Activated naive CD4-positive, alpha-beta T cell treated with anti-CD3 and anti-CD28 coated beads for 36 hours (primary cell): ENCODE measurements at regions of chr1 and their contacts with region 1.

Region 1: DNA sequence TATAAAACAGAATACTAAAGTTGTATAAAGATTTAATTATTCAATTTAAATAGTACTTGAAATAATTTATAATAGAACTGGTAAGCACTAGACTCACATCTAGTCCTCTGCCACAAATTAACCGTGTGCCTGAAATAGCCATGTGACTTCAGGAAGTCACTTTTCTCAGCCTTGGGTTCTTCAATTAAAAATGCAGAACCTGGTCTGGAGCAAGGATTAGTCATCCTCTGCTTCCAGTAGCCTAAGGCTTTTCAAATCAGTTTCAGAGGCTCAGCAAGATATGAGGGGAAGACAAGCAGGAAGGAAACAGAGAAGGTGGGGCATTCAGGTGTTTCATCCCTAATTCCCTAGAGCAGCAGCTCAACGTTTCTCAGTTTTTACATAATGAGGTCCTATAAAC is 23.0 kb downstream of the DPH5 start:
- DNase-seq: no peak
- H3K4me3 Mint-ChIP-seq: no peak overlapping the region
- H3K27ac Mint-ChIP-seq: peak overlapping the region; percentile 59
- H3K4me1 Mint-ChIP-seq: peaks cover 52% of the 10 kb centered on the region
- H3K27me3 Mint-ChIP-seq: no peaks in the 10 kb centered on the region

Region 2: DNA sequence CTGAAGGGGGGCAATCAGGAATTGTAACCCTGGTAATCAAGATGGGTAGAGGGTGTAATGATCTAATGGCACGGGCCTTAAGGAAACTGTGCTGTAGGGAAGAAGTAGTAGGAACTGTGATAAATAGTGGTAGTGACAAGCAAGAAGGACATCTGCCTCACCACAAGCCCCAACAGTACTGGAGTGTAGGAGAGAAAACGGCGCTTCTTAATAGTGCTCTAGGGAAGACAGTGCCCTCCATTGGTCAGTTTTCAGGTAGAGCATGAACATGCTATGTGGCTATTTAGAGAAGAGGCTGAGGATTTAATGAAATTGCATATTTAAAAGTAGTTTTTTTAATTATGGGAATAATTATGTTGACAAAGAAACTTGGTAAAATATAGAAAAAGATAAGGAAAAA is 74.4 kb before region 1 on chr1:
- CTCF ChIA-PET with region 1: no interaction called
- intact Hi-C with region 1: loop called (anchors 1 kb)
- DNase-seq: peak; percentile 49
- H3K4me3 Mint-ChIP-seq: no peak overlapping the region
- H3K27ac Mint-ChIP-seq: no peak overlapping the region
- H3K4me1 Mint-ChIP-seq: peaks cover 30% of the 10 kb centered on the region
- H3K27me3 Mint-ChIP-seq: no peaks in the 10 kb centered on the region

Region 3: GRCh38 chr1:101025657-101026504 is 23.3 kb after region 1 on chr1 and contains the start of gene DPH5:
- CTCF ChIA-PET with region 1: no interaction called
- intact Hi-C with region 1: loop called (anchors 1 kb)
- DNase-seq: peak; percentile 92
- H3K4me3 Mint-ChIP-seq: peak within 1 kb of the TSS; percentile 99
- H3K27ac Mint-ChIP-seq: peak within 1 kb of the TSS; percentile 98
- H3K4me1 Mint-ChIP-seq: peaks cover 58% of the 10 kb centered on the region
- H3K27me3 Mint-ChIP-seq: no peaks in the 10 kb centered on the region
- total RNA-seq, gene DPH5: 61.7 to 66.3 TPM

Region 4: DNA sequence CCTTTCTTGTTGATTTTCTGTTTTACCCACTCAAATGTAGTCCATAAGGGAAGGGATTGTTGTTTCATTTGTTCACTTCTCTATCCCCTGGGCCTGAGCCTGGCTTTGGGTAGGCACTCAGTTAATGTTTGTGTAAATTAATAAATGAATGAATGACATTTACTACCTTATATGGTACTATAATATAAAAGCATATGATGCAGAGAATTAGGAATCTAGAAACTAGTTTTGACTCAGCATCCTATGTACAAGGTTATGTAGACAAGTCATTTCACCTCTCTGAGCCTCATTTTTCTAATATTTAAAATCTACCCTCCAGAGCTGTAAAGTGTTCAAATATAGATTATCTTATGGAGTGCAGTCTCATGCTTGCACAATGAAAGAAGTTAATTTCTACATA is 165.3 kb after region 1 on chr1:
- CTCF ChIA-PET with region 1: no interaction called
- intact Hi-C with region 1: loop called (anchors 2 kb)
- DNase-seq: no peak
- H3K4me3 Mint-ChIP-seq: no peak overlapping the region
- H3K27ac Mint-ChIP-seq: peak overlapping the region; percentile 43
- H3K4me1 Mint-ChIP-seq: peaks cover 41% of the 10 kb centered on the region
- H3K27me3 Mint-ChIP-seq: no peaks in the 10 kb centered on the region

Region 5: DNA sequence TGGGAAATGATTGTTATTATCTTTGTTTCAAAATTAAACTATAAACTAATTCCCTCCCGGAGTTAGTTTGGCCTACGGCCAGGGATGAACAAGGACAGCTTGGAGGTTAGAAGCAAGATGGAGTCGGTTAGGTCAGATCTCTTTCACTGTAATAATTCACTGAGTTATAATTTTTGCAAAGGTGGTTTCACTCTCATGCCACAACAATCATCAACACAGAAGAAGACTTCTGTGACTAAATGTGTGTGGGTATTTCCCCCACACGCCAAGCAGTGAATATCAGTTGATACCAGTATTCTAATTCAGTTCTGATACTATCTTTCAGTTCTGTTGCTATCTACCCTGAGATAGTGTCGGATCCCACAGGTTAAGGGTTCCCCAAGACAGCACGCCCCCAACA is 449.3 kb after region 1 on chr1:
- CTCF ChIA-PET with region 1: no interaction called
- intact Hi-C with region 1: loop called (anchors 10 kb)
- DNase-seq: peak; percentile 48
- H3K4me3 Mint-ChIP-seq: no peak overlapping the region
- H3K27ac Mint-ChIP-seq: no peak overlapping the region
- H3K4me1 Mint-ChIP-seq: peaks cover 40% of the 10 kb centered on the region
- H3K27me3 Mint-ChIP-seq: peaks cover 3% of the 10 kb centered on the region